ENCODE measurements at regions of chr11 and their contacts with region 1.

Region 1: GRCh38 chr11:118227865-118228785 is 3.3 kb upstream of the JAML start:
- DNase-seq: no peak
- ATAC-seq: peak; percentile 85
- H3K4me3 ChIP-seq: no peak overlapping the region
- H3K27ac ChIP-seq: peak overlapping the region; percentile 45; the same call in 1 of the 2 replicates
- H3K4me1 ChIP-seq: peaks cover 30% of the 10 kb centered on the region
- H3K27me3 ChIP-seq: no peaks in the 10 kb centered on the region
- CTCF ChIP-seq: no peak
- EP300 ChIP-seq: peak; percentile 90 to 94
- POLR2A ChIP-seq: no peak
- RAD21 ChIP-seq: no peak

Region 2: GRCh38 chr11:118164885-118165284 is 63.2 kb before region 1 on chr11:
- CTCF ChIA-PET with region 1: no interaction called
- POLR2A ChIA-PET with region 1: no interaction called
- RAD21 ChIA-PET with region 1: no interaction called
- SMC1A ChIA-PET with region 1: no interaction called
- in situ Hi-C with region 1: no loop called
- intact Hi-C with region 1: no loop called
- DNase-seq: no peak
- ATAC-seq: no peak
- H3K4me3 ChIP-seq: no peak overlapping the region
- H3K27ac ChIP-seq: no peak overlapping the region
- H3K4me1 ChIP-seq: no peaks in the 10 kb centered on the region
- H3K27me3 ChIP-seq: peaks cover 1 to 3% of the 10 kb centered on the region in 2 experiments; a peak in 3 of 4 replicates
- CTCF ChIP-seq: no peak
- EP300 ChIP-seq: no peak
- POLR2A ChIP-seq: no peak
- RAD21 ChIP-seq: no peak

Region 3: DNA sequence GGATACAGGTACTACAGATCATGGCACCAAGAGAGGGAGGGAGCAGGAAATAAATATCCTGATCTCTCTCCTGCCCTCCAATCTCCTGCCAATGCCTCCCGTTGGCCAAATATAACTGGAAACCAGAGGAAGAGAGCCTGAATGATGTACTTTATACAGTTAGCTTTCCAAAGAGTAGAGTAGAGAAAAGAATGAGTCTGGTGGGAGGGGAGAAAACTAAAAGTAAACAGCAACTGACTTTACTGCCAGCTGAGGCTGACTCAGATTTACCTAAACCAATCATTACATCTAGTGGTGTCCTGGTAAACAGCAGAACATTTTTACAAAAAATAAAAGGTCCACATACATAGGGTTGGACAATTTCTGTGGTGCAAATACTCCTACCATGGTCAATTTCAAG is 18.9 kb after region 1 on chr11:
- CTCF ChIA-PET with region 1: interaction called, 4 read pairs
- POLR2A ChIA-PET with region 1: interaction called, 6 read pairs
- RAD21 ChIA-PET with region 1: interaction called, 6 read pairs
- SMC1A ChIA-PET with region 1: interaction called, 10 read pairs
- in situ Hi-C with region 1: no loop called
- intact Hi-C with region 1: loop called (anchors 2 kb)
- DNase-seq: no peak
- ATAC-seq: peak; percentile 2; the same call in 1 of the 3 replicates
- H3K4me3 ChIP-seq: no peak overlapping the region
- H3K27ac ChIP-seq: no peak overlapping the region
- H3K4me1 ChIP-seq: peaks cover 7% of the 10 kb centered on the region; the same call in 1 of the 2 replicates
- H3K27me3 ChIP-seq: no peaks in the 10 kb centered on the region
- CTCF ChIP-seq: no peak; a peak in 1 of 6 replicates
- EP300 ChIP-seq: no peak
- POLR2A ChIP-seq: no peak
- RAD21 ChIP-seq: 0 out of 2 replicates have a peak, but pooled peaks have one; percentile 11